H1 (cell line): ENCODE measurements at regions of chr15 and their contacts with region 1.

Region 1: GRCh38 chr15:40405501-40406381 is at the start of gene IVD:
- DNase-seq: peak; percentile 78 to 92
- H3K4me3 ChIP-seq: peak within 1 kb of the TSS; percentile 67 to 82 (median 74)
- H3K27ac ChIP-seq: peak within 1 kb of the TSS; percentile 72; the same call in 1 of the 2 replicates
- H3K4me1 ChIP-seq: peaks cover 0 to 4% (median 1%) of the 10 kb centered on the region in 4 experiments; a peak in 3 of 7 replicates
- H3K27me3 ChIP-seq: no peaks in the 10 kb centered on the region
- CTCF ChIP-seq: no peak
- EP300 ChIP-seq: no peak
- POLR2A ChIP-seq: peak; percentile 84 to 88
- RAD21 ChIP-seq: no peak
- total RNA-seq, gene IVD: 78.8 and 80.0 TPM in 2 replicates

Region 2: GRCh38 chr15:40388946-40389841 is 16.5 kb before region 1 on chr15:
- CTCF ChIA-PET with region 1: interaction called, 9 read pairs
- POLR2A ChIA-PET with region 1: interaction called, 22 read pairs
- DNase-seq: no peak
- H3K4me3 ChIP-seq: no peak overlapping the region
- H3K27ac ChIP-seq: no peak overlapping the region
- H3K4me1 ChIP-seq: no peaks in the 10 kb centered on the region; a peak in 1 of 7 replicates
- H3K27me3 ChIP-seq: no peaks in the 10 kb centered on the region
- CTCF ChIP-seq: no peak
- EP300 ChIP-seq: no peak
- POLR2A ChIP-seq: no peak
- RAD21 ChIP-seq: no peak

Region 3: DNA sequence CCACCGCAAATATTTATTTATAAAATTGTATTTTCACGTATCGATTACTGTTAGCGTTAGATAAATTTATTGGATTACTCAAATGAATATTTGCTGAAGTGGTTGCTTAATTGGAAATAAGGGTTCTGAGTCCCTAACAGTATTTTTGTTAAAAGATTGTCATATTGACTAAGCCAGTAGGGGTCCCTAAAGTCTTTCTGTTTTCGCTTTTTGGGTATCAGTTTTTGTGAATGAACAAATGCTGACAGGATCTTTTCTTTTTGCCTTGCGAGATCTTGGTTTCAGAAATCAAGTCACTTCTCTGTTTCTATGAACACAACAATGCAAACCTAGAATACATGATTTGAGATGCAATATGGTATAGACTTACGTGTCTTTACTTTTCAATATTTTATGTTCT is 296.3 kb after region 1 on chr15:
- CTCF ChIA-PET with region 1: no interaction called
- POLR2A ChIA-PET with region 1: no interaction called
- DNase-seq: no peak
- H3K4me3 ChIP-seq: no peak overlapping the region
- H3K27ac ChIP-seq: no peak overlapping the region
- H3K4me1 ChIP-seq: no peaks in the 10 kb centered on the region
- H3K27me3 ChIP-seq: no peaks in the 10 kb centered on the region
- CTCF ChIP-seq: peak in 1 of 3 experiments; percentile 7; a peak in 1 of 4 replicates
- EP300 ChIP-seq: no peak
- POLR2A ChIP-seq: no peak
- RAD21 ChIP-seq: peak; percentile 35 to 42